ENCODE measurements at regions of chr9 and their contacts with region 1.

Region 1: DNA sequence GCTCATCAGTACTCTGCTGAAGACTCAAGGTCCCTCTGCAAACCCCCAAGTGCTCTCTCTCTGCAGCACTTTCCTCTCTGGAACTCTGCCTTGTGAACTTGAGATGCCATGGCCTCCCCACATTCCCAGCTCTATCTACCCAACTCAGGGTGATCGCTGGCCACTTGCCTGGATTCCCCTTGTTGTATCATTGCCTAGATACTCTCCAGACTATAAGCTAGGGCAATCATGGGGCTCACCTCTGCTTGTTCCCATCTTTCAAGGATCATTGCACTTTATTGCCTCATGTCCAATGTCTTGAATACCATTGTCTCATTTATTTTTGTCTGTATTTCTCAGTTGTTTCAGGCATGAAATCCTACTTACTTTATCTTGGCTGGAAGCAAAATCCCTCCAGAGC is 144.1 kb downstream of the PLPPR1 start:
- DNase-seq: no peak
- ATAC-seq: no peak
- H3K4me3 ChIP-seq: no peak overlapping the region
- H3K4me1 ChIP-seq: no peaks in the 10 kb centered on the region
- CTCF ChIP-seq: no peak

Region 2: GRCh38 chr9:101235105-101235866 is 62.7 kb after region 1 on chr9:
- intact Hi-C with region 1: loop called in 1 of 2 experiments (anchors 5 kb)
- DNase-seq: no peak
- ATAC-seq: no peak
- H3K4me3 ChIP-seq: no peak overlapping the region
- H3K4me1 ChIP-seq: no peaks in the 10 kb centered on the region
- CTCF ChIP-seq: no peak